Activated naive CD4-positive, alpha-beta T cell treated with anti-CD3 and anti-CD28 coated beads, Interleukin-2, amount 10 ng/mL, durations not matched to agents 7 days and 5 days (primary cell): ENCODE measurements at regions of chr2 and their contacts with region 1.

Region 1: DNA sequence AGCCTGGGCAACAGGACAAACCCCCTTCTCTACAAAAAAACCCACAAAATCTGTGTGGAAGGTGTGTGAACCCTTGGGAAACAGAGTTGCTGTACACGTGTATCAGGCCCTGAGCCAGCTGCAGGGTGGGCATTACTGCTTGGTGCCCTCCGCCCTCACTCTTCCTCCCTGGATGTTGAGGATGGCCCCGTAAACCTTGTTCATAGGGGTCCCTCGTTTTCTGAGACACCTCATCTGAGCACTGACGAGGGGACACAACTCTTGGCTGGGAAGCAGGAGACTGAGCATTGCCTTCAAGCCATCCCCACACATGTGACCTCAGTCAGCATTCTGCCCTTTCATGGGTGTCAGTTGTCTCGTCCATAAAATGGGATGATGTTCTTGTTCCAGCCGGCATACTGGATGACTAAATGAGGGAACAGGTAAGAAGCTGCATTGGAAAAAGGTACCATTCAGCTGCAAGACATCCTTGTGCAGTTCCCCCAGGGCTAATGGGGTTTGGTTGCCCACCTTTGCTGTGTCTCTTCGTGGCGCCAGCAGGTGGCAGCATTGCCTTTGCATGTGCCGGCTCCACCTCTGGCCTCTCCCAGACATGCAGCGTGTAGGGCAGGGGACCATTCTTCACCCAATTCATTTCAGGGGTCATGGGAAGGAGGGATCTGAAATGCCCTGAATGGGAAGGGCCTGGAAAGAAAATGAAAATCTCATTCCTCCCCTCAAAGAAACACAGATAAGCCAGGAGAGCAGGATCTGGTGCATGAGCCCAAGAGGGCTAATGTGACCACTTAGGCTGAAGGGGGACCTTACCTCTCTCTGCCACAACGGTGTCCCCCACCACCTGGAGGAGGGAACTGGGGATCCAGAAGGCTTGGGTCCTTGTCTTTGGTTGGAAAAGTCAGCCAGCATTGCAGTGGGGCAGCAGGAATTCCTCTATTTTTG is 36.4 kb upstream of the HAAO start:
- DNase-seq: peak; percentile 76
- H3K4me3 Mint-ChIP-seq: no peak overlapping the region
- H3K27ac Mint-ChIP-seq: no peak overlapping the region
- H3K4me1 Mint-ChIP-seq: peaks cover 14% of the 10 kb centered on the region
- H3K27me3 Mint-ChIP-seq: peaks cover 38% of the 10 kb centered on the region

Region 2: GRCh38 chr2:42810121-42810970 is 18.4 kb before region 1 on chr2:
- CTCF ChIA-PET with region 1: interaction called, 15 read pairs
- DNase-seq: peak; percentile 95
- H3K4me3 Mint-ChIP-seq: peak overlapping the region; percentile 86
- H3K27ac Mint-ChIP-seq: peak overlapping the region; percentile 98
- H3K4me1 Mint-ChIP-seq: peaks cover 26% of the 10 kb centered on the region
- H3K27me3 Mint-ChIP-seq: peaks cover 41% of the 10 kb centered on the region

Region 3: GRCh38 chr2:42848726-42849290 is 20.1 kb after region 1 on chr2:
- CTCF ChIA-PET with region 1: interaction called, 10 read pairs
- DNase-seq: no peak
- H3K4me3 Mint-ChIP-seq: no peak overlapping the region
- H3K27ac Mint-ChIP-seq: no peak overlapping the region
- H3K4me1 Mint-ChIP-seq: no peaks in the 10 kb centered on the region
- H3K27me3 Mint-ChIP-seq: peaks cover 20% of the 10 kb centered on the region

Region 4: DNA sequence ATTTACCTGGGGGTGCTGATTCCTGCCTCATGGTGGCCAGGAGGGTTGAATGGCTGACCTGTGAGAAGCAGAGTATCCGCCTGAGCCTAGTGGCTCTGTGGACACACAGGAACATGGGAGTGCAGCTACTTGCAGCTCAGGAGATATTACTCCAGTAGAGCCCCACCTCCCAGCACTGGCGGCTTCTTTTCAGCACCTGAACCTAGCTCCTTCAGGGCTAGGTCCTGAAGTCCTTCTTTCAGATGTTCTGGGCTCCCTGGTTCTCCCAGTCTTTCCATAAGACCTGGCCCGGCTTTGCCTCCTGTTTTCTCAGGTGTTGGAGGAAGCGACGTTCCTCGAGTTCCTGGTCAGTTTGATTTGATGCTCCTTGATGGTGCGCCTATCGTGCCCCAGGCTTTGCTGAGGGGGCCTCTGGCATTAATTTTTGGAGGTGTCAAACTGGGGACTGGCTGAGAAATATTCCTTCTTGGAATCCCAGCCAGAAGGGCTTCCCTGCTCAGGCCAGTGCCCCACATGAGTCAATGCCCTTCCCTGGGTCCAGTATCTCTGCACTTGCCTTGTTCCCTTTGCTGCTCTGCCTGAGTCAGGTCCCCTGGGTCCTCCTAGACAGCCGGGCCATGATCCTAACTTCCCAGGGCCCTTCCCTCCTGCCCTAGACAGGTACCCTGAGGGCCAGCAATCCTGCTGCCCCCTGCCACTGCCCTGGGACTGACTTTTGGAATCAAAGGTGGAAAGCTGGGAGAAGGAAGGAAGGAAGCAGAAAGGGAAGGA is 74.4 kb after region 1 on chr2:
- CTCF ChIA-PET with region 1: no interaction called
- DNase-seq: no peak
- H3K4me3 Mint-ChIP-seq: no peak overlapping the region
- H3K27ac Mint-ChIP-seq: no peak overlapping the region
- H3K4me1 Mint-ChIP-seq: no peaks in the 10 kb centered on the region
- H3K27me3 Mint-ChIP-seq: peaks cover 37% of the 10 kb centered on the region